ENCODE measurements at regions of chr2 and their contacts with region 1.

Region 1: GRCh38 chr2:121530212-121530705 is 421 bp upstream of the RNU4ATAC start:
- DNase-seq: peak; percentile 86
- ATAC-seq: peak; percentile 70
- H3K4me3 Mint-ChIP-seq: peak overlapping the region; percentile 91
- H3K27ac Mint-ChIP-seq: peak overlapping the region; percentile 98
- H3K4me1 Mint-ChIP-seq: peaks cover 30% of the 10 kb centered on the region
- H3K27me3 Mint-ChIP-seq: no peaks in the 10 kb centered on the region

Region 2: GRCh38 chr2:121510857-121511256 is 19.4 kb before region 1 on chr2:
- POLR2A ChIA-PET with region 1: no interaction called
- DNase-seq: no peak
- ATAC-seq: no peak
- H3K4me3 Mint-ChIP-seq: no peak overlapping the region
- H3K27ac Mint-ChIP-seq: no peak overlapping the region
- H3K4me1 Mint-ChIP-seq: peaks cover 9% of the 10 kb centered on the region
- H3K27me3 Mint-ChIP-seq: no peaks in the 10 kb centered on the region

Region 3: DNA sequence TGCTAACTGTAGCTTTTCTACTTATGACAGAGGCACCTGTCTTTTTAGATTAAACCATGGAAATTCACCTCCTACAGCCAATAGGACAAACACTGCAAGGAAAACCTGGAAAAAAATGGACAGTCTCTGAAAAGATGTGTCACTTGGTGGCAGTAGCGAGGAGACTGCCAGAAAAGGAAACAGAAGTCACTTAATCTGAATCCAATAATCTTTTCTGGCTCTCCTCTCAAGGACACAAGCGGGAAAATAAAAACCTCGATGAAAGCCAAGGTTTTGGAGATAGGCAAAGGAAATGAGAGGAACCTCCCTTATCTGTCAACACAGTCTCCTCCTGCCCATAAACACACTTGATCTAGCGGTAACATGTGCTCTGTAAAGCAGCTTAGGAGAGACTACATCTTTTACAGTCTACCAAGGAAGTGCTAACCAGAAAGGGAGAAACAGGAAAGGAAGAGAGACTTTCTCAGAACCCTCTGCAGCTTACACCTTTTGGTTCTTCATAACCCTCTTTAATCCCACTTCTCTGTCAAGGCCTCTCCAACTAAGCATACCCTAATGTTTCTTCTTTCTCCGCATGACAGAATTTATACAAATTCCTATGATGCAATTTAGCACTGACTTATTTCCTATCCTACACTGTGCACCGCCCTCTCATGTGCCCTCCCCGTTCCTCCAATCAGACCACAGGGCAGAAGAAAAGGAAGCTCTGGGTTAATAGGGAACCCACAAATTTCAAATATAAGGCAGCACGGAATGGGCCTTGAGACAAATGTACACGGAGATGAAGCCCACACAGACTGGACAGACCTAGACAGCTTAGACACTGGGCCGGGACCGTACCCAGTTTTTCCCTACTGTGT is 66.2 kb after region 1 on chr2:
- POLR2A ChIA-PET with region 1: interaction called, 20 read pairs
- DNase-seq: no peak
- ATAC-seq: peak; percentile 85
- H3K4me3 Mint-ChIP-seq: peak overlapping the region; percentile 76
- H3K27ac Mint-ChIP-seq: peak overlapping the region; percentile 85
- H3K4me1 Mint-ChIP-seq: peaks cover 35% of the 10 kb centered on the region
- H3K27me3 Mint-ChIP-seq: no peaks in the 10 kb centered on the region

Region 4: DNA sequence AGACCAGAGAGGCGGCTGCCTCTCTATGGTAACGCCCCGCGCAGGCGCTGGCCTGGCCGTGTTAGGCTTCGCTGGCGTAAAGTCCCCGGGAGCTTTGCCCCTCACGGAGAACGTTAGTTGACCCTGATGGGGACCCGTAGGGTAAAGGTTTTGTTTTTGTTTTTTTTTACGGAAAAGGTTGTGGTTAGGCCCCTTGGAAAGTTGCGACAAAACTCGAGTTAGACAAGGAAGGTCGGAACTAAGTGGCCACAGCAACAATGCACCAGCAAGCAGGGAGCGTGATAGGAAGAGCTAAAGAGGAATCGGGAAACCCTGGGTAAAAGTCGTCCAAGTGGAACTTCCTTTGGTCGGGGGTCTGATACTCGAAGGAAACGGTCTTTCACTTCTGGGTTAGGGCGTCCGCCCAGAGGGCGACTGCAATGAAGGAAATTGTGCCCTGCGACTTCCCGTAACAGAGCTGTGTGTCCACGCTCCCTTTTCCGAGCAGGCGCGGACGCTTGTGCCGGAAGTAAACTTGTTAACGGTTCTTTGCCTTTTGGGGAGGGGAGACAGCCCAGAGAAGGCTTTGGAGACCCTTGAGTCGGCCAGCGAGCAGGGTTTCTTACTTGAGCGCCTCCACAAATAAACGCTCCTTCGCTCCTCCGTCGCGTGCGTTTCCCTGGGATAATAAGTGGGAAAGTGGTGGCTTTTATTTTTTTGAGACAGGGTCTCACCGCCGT is 119.5 kb after region 1 on chr2:
- POLR2A ChIA-PET with region 1: interaction called, 101 read pairs
- DNase-seq: peak; percentile 83
- ATAC-seq: peak; percentile 94
- H3K4me3 Mint-ChIP-seq: peak overlapping the region; percentile 96
- H3K27ac Mint-ChIP-seq: peak overlapping the region; percentile 99
- H3K4me1 Mint-ChIP-seq: peaks cover 46% of the 10 kb centered on the region
- H3K27me3 Mint-ChIP-seq: no peaks in the 10 kb centered on the region

Region 5: DNA sequence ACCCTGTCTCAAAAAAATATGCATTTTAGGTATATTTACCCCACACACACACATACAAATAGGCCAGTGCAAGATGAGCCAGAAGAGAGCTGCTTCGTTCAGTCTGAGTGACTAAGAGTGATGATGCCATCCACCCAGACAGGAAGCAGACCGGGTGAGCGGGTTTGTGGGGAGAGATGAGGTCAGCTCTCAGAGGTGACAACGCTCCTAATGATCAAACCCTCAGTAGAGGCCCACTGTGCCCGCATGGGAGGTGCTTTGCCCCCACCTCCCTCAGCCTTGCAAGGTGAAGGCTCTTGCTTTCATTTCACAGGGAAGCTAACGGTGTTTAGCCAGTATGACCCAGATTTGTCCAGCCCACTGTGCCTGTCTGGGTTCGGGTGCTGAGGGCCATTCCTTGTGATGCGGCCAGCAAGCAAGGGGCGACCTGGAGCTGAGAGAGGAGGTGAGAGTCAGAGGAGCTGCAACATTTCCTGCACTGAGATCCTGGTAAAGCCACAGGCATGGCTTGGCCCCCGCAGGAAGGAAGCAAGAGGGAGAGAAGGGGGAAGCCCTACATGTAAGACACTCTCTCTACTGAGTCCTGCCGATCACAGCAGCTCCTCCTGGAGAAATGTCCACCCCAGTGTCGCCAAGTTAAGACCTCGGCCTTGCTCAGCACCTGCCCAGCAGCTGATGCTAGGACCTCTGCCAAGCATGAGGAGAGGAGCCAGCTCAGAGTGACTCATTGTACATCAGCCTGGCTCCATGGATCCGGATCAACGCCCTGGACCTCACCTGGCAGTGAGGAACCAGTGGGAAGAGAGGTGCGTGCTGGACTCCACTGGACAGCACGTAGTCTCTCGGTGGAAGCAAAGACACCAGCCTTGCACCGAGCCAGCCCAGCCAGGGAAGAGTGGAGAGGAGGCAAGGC is 169.4 kb after region 1 on chr2:
- POLR2A ChIA-PET with region 1: interaction called, 103 read pairs
- DNase-seq: peak; percentile 86
- ATAC-seq: peak; percentile 98
- H3K4me3 Mint-ChIP-seq: peak overlapping the region; percentile 95
- H3K27ac Mint-ChIP-seq: peak overlapping the region; percentile 99
- H3K4me1 Mint-ChIP-seq: peaks cover 47% of the 10 kb centered on the region
- H3K27me3 Mint-ChIP-seq: no peaks in the 10 kb centered on the region

Region 6: DNA sequence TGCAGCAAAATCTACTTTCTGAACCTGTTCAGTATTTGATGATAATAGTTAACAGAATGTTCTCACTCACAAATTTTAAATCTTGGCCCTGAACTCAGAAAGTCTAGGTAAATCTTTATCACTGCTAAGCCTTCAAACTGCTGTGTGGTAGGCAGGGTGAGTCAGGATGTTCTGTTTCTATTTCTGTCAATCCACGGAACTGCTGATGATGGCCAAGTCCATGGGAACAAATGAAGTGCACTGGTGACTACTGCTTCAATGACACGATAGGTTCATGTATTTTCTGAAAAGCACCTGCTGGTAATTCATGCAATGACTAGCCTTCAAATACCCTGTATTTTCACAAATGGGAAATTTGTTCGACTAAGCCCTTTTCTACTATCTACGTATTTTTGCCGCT is 192.2 kb after region 1 on chr2:
- POLR2A ChIA-PET with region 1: interaction called, 22 read pairs
- DNase-seq: no peak
- ATAC-seq: no peak
- H3K4me3 Mint-ChIP-seq: no peak overlapping the region
- H3K27ac Mint-ChIP-seq: no peak overlapping the region
- H3K4me1 Mint-ChIP-seq: peaks cover 7% of the 10 kb centered on the region
- H3K27me3 Mint-ChIP-seq: no peaks in the 10 kb centered on the region

Region 7: GRCh38 chr2:121736462-121737341 is 206.4 kb after region 1 on chr2 and contains the start of gene NIFK:
- POLR2A ChIA-PET with region 1: interaction called, 57 read pairs
- DNase-seq: peak; percentile 100
- ATAC-seq: peak; percentile 86
- H3K4me3 Mint-ChIP-seq: peak within 1 kb of the TSS; percentile 93
- H3K27ac Mint-ChIP-seq: peak within 1 kb of the TSS; percentile 97
- H3K4me1 Mint-ChIP-seq: peaks cover 33% of the 10 kb centered on the region
- H3K27me3 Mint-ChIP-seq: peaks cover 3% of the 10 kb centered on the region
- total RNA-seq, gene NIFK: 62.4 to 73.2 TPM

Region 8: GRCh38 chr2:121755236-121756111 is 225.2 kb after region 1 on chr2 and contains the start of gene TSN:
- POLR2A ChIA-PET with region 1: interaction called, 12 read pairs
- DNase-seq: peak; percentile 98
- ATAC-seq: peak; percentile 99
- H3K4me3 Mint-ChIP-seq: peak within 1 kb of the TSS; percentile 100
- H3K27ac Mint-ChIP-seq: peak within 1 kb of the TSS; percentile 93
- H3K4me1 Mint-ChIP-seq: peaks cover 23% of the 10 kb centered on the region
- H3K27me3 Mint-ChIP-seq: no peaks in the 10 kb centered on the region
- total RNA-seq, gene TSN: 50.0 to 51.5 TPM